Activated T-helper 2 cell treated with anti-CD3 and anti-CD28 coated beads, Interferon-gamma antibody, Interleukin-2, Interleukin-4, amounts not matched to agents 10 μg/mL and 5 μg/mL and 100 μg/mL, durations not matched to agents 14 hours and 24 hours and 36 hours (primary cell): ENCODE measurements at regions of chr7 and their contacts with region 1.

Region 1: GRCh38 chr7:100604028-100604975 is 2.1 kb downstream of the PCOLCE start:
- DNase-seq: peak; percentile 71
- H3K4me3 Mint-ChIP-seq: peak overlapping the region; percentile 79
- H3K27ac Mint-ChIP-seq: peak overlapping the region; percentile 84
- H3K4me1 Mint-ChIP-seq: peaks cover 6% of the 10 kb centered on the region
- H3K27me3 Mint-ChIP-seq: peaks cover 3% of the 10 kb centered on the region

Region 2: GRCh38 chr7:100626530-100627237 is 22.4 kb after region 1 on chr7:
- intact Hi-C with region 1: loop called (anchors 1 kb)
- DNase-seq: peak; percentile 83
- H3K4me3 Mint-ChIP-seq: peak overlapping the region; percentile 74
- H3K27ac Mint-ChIP-seq: peak overlapping the region; percentile 42
- H3K4me1 Mint-ChIP-seq: peaks cover 35% of the 10 kb centered on the region
- H3K27me3 Mint-ChIP-seq: no peaks in the 10 kb centered on the region

Region 3: GRCh38 chr7:100691676-100692577 is 87.6 kb after region 1 on chr7:
- intact Hi-C with region 1: loop called (anchors 1 kb)
- DNase-seq: peak; percentile 74
- H3K4me3 Mint-ChIP-seq: peak overlapping the region; percentile 90
- H3K27ac Mint-ChIP-seq: peak overlapping the region; percentile 0
- H3K4me1 Mint-ChIP-seq: peaks cover 23% of the 10 kb centered on the region
- H3K27me3 Mint-ChIP-seq: peaks cover 5% of the 10 kb centered on the region